Endothelial cell of umbilical vein (primary cell): ENCODE measurements at regions of chr1 and their contacts with region 1.

Region 1: DNA sequence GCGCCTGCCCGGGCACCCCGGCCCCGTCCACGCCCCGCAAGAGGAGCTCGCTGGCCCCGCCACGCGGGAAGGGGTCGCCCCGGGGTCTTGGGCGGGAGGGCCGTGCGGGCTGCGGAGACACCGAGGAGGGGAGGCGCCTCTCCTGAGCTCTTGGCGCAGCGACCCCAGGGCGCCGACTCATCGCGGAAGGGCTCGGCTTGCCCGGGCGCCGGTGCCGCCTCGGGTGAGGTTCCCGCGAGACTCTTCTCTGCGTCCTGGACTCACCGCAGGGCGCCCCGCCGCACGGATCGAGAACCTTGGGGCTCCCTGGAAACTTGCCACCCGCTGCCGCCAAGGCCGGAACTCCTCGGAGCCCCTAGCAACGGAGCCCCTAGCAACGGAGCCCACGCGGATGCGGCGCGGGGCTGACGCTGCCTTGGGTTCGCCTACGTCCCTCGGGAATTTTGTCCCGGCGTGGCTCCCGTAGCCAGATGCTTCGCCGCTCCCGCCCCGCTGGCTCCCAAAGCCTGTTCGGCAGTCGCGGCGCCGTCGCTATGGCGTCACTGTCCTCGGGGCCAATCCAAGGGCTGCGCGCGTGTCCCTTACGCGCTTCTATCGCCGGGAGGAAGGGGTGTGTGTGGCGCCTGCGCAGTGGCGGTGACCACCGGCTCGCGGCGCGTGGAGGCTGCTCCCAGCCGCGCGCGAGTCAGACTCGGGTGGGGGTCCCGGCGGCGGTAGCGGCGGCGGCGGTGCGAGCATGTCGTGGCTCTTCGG is at the start of gene ATAD3A:
- DNase-seq: peak; percentile 99
- H3K4me3 ChIP-seq: peak within 1 kb of the TSS; percentile 33 to 69 (median 61)
- H3K27ac ChIP-seq: peak within 1 kb of the TSS; percentile 96
- H3K4me1 ChIP-seq: peaks cover 4% of the 10 kb centered on the region
- H3K27me3 ChIP-seq: no peaks in the 10 kb centered on the region
- CTCF ChIP-seq: peak in 1 of 2 donors; percentile 0
- POLR2A ChIP-seq: peak; percentile 84
- total RNA-seq, gene ATAD3A: 55.2 and 57.4 TPM in 2 replicates

Region 2: DNA sequence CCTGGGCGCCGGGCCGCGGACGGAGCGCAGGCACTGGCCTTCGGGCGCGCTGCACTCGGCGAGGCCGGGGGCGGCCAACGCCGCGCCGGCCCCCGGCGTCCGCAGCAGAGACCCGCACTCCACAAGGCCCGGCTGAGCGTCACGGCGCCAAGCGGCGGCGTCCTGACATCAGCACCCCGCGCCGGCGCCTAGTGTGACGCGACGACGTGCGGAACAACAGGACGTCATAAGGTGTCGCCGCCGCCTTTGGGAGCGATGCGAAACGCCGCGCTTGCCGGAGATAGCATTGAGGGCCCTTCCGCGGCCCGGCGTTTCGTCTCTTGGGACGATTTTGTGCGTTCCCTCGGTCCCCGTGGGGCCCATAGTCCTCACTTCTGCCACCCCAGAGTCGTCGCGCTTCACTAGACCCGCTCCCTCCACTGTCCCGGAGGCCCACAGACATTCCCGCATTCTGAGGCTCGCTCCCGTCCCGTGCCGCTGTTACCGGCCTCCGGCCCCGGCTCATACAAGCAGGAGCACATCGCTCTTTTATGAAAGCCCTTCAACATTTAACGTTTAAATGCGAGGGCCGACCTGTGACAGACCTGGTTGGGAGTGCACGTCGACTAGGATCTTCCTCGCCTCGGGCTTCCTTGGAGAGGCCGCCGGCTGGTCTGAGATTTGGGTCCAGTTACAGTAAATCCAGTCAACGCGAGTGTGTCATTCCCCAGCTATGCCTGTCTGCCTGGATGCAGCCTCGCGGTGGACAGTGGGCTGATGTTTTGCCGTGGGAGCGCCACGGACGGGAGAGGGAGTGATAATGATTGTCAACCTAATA is 63.2 kb after region 1 on chr1 and contains the start of gene SSU72:
- CTCF ChIA-PET with region 1: no interaction called
- POLR2A ChIA-PET with region 1: no interaction called
- dilution Hi-C with region 1: no loop called
- intact Hi-C with region 1: loop called (anchors 2 kb)
- DNase-seq: peak; percentile 88
- H3K4me3 ChIP-seq: peak within 1 kb of the TSS; percentile 52 to 97 (median 75)
- H3K27ac ChIP-seq: peak within 1 kb of the TSS; percentile 95
- H3K4me1 ChIP-seq: peaks cover 12% of the 10 kb centered on the region
- H3K27me3 ChIP-seq: no peaks in the 10 kb centered on the region
- CTCF ChIP-seq: no peak
- POLR2A ChIP-seq: peak; percentile 93
- total RNA-seq, gene SSU72: 124 and 129 TPM in 2 replicates